ENCODE measurements at regions of chr12 and their contacts with region 1.

Region 1: DNA sequence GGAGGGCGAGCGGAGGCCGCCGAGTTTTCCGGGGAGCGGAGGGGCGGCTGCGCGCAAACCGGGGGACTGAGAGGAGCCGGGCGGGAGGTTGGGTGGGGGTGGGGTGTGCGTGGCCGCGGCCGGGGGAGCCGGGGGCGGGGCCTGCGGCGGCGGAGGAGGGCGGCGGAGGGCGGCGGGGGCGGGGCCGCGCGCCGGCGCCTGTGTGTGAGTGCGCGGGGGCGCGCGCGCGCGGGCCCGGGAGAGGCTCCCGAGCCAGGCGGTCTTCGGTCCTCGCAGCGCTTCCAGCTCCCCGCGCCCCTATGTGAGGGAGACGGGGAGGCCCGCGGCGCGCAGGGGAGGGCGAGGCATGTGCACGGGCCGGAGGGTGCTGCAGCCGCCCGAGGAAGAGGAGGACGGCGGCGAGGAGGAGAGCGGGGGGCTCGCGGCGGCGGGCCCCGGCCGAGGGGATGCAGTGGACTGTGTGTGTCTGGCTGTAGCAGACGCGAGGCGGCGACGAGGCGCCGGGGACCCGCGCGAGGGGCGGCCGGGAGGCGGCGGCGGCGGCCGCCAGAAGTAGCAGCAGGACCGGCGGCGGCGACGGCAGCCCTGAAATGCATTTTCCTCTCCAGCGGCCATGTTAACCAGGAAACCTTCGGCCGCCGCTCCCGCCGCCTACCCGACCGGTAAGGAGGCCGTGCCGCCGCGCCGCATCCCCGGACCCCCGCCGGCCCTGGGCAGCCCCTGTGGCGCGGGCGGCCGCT is at the start of gene DYRK2:
- DNase-seq: peak; percentile 66
- H3K4me3 Mint-ChIP-seq: peak within 1 kb of the TSS; percentile 75
- H3K27ac Mint-ChIP-seq: peak within 1 kb of the TSS; percentile 73
- H3K4me1 Mint-ChIP-seq: peaks cover 37% of the 10 kb centered on the region
- H3K27me3 Mint-ChIP-seq: peaks cover 4% of the 10 kb centered on the region
- total RNA-seq, gene DYRK2: 19.7 and 20.6 TPM in 2 replicates

Region 2: DNA sequence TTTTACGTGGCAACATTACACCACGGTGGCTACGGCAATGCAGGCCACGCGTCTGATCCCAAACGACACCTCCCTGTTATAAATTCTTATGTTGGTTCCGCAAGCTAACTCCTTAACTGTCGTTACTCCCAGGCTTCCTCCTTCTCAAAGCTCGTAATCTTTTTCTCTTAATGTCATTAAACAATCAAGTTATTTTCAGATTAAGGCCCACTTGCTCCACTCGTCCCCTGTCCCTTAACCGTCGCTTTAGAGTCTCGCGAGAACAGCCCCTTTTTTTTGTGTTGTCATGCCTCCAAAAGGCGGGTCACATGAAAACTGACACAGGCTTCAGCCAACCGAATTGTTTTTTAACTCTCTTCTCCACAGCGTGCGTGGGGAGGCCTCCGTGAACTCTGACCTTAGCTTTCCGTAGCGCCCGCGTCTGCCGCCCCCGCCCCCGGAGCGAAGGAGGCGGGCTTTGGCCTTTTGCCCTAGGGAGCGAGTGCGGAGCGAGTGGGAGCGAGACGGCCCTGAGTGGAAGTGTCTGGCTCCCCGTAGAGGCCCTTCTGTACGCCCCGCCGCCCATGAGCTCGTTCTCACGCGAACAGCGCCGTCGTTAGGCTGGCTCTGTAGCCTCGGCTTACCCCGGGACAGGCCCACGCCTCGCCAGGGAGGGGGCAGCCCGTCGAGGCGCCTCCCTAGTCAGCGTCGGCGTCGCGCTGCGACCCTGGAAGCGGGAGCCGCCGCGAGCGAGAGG is 379.6 kb before region 1 on chr12 and contains the start of gene CAND1:
- intact Hi-C with region 1: loop called (anchors 2 kb)
- DNase-seq: peak; percentile 94
- H3K4me3 Mint-ChIP-seq: peak within 1 kb of the TSS; percentile 89
- H3K27ac Mint-ChIP-seq: peak within 1 kb of the TSS; percentile 99
- H3K4me1 Mint-ChIP-seq: peaks cover 31% of the 10 kb centered on the region
- H3K27me3 Mint-ChIP-seq: no peaks in the 10 kb centered on the region
- total RNA-seq, gene CAND1: 197 and 198 TPM in 2 replicates

Region 3: GRCh38 chr12:67452119-67452805 is 196.4 kb before region 1 on chr12:
- intact Hi-C with region 1: loop called (anchors 5 kb)
- DNase-seq: no peak
- H3K4me3 Mint-ChIP-seq: no peak overlapping the region
- H3K27ac Mint-ChIP-seq: peak overlapping the region; percentile 64
- H3K4me1 Mint-ChIP-seq: peaks cover 37% of the 10 kb centered on the region
- H3K27me3 Mint-ChIP-seq: peaks cover 38% of the 10 kb centered on the region

Region 4: DNA sequence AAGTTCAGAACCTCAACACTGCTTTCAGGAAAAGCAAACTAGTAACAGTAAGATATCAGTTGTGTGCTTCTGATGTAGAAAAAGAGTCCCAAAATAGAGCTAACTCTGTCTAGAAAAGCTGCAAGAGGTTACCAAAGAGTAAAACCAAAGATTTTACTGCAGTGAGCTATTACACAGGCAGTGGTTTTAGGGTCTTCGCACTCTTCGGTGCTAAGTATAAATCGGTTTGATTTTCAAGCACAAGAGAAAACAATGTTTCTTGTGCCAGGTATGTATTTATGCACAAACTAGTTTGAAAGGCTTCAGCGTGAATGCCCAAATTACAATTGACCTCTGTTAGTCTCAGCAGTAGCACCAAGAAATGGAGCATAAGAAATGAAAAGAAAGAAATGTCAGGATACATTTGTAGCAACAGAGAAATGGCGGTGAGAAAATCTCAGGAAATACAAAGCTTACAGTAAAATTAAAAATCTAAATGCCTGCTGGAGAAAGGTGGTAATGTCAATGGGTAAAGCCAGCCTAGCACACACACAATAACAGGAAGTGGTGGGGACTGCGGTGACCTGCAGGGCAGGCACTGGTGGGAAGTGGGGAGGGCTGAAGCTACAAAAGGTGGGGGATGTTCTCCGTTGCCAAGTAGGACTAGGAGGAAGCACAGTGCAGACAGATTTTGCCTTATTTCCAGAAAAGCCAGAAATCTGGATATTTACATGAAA is 18.2 kb before region 1 on chr12:
- intact Hi-C with region 1: loop called (anchors 2 kb)
- DNase-seq: peak; percentile 81
- H3K4me3 Mint-ChIP-seq: peak overlapping the region; percentile 7
- H3K27ac Mint-ChIP-seq: peak overlapping the region; percentile 52
- H3K4me1 Mint-ChIP-seq: peaks cover 42% of the 10 kb centered on the region
- H3K27me3 Mint-ChIP-seq: peaks cover 1% of the 10 kb centered on the region

Region 5: DNA sequence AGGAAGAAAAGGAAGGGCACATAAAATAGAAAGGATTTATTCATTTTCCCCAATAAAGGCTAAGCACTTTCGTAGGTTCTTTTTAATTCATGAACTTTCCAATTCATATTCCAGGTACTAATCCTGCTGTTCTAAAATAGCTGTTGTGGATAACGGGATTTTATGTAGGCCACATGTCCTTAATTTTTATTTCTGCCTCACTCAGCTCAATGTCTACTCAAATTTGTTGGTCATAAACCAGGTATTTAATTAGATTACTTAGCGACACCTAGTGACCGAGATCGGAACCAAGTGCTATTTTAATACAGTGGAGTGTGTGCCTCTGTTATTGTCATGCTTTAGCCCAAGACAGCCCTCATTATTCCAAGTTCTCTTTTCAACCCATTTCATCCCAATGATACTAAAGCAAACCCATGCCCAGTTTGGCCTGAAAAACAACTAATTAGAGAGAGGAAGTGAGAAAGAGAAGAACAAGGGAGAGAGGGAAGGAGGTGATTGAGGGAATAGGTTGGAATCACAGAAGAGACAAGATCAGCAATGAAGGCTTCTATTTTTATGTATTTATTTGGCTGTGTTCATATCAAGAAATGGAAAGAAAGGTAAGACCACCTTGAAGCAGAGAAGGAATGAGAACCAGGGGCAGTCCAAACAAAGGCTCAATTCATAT is 294.7 kb after region 1 on chr12:
- intact Hi-C with region 1: loop called (anchors 2 kb)
- DNase-seq: peak; percentile 18
- H3K4me3 Mint-ChIP-seq: no peak overlapping the region
- H3K27ac Mint-ChIP-seq: no peak overlapping the region
- H3K4me1 Mint-ChIP-seq: peaks cover 1% of the 10 kb centered on the region
- H3K27me3 Mint-ChIP-seq: peaks cover 16% of the 10 kb centered on the region

Region 6: DNA sequence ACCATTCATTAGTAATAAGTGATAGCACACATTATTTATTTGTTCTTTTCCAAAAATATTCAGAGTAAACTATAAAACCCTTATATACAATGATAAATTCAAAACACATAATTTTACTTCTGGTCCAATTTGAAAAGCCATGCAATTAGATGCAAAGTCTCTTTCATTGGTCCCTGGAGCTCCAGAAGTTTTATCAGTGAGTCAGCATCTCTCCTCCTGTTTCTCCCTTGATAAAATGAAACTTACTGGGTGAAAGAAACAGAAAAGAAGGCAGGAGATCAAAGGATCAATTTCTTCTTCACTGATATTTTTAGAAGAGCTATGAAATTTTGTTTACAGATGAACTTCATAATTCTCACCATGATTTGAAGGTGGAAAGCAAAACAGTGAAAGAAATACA is 463.3 kb after region 1 on chr12:
- intact Hi-C with region 1: no loop called
- DNase-seq: no peak
- H3K4me3 Mint-ChIP-seq: no peak overlapping the region
- H3K27ac Mint-ChIP-seq: no peak overlapping the region
- H3K4me1 Mint-ChIP-seq: peaks cover 25% of the 10 kb centered on the region
- H3K27me3 Mint-ChIP-seq: no peaks in the 10 kb centered on the region